B cell (primary cell): ENCODE measurements at regions of chr17 and their contacts with region 1.

Region 1: GRCh38 chr17:48724251-48725003 is 1.4 kb downstream of the PRAC2 start:
- DNase-seq: peak; percentile 77
- ATAC-seq: peak; percentile 47
- H3K4me3 ChIP-seq: peak overlapping the region in 1 of 5 experiments; percentile 18
- H3K4me3 Mint-ChIP-seq: peak overlapping the region; percentile 62
- H3K27ac ChIP-seq: no peak overlapping the region
- H3K27ac Mint-ChIP-seq: peak overlapping the region; percentile 69
- H3K4me1 ChIP-seq: peaks cover 51 to 77% of the 10 kb centered on the region in 2 donors
- H3K4me1 Mint-ChIP-seq: peaks cover 35% of the 10 kb centered on the region
- H3K27me3 ChIP-seq: peaks cover 0 to 100% (median 89%) of the 10 kb centered on the region in 4 experiments
- H3K27me3 Mint-ChIP-seq: peaks cover 80% of the 10 kb centered on the region
- CTCF ChIP-seq: peak; percentile 68

Region 2: GRCh38 chr17:48671697-48672171 is 52.7 kb before region 1 on chr17:
- CTCF ChIA-PET with region 1: no interaction called
- POLR2A ChIA-PET with region 1: no interaction called
- intact Hi-C with region 1: no loop called
- DNase-seq: peak; percentile 72
- ATAC-seq: peak; percentile 64
- H3K4me3 ChIP-seq: no peak overlapping the region
- H3K4me3 Mint-ChIP-seq: peak overlapping the region; percentile 26
- H3K27ac ChIP-seq: no peak overlapping the region
- H3K27ac Mint-ChIP-seq: no peak overlapping the region
- H3K4me1 ChIP-seq: peaks cover 6 to 7% of the 10 kb centered on the region in 2 donors
- H3K4me1 Mint-ChIP-seq: peaks cover 3% of the 10 kb centered on the region
- H3K27me3 ChIP-seq: peaks cover 0 to 28% (median 16%) of the 10 kb centered on the region in 4 experiments
- H3K27me3 Mint-ChIP-seq: peaks cover 46% of the 10 kb centered on the region
- CTCF ChIP-seq: peak; percentile 87

Region 3: GRCh38 chr17:48747445-48748363 is 23.3 kb after region 1 on chr17:
- CTCF ChIA-PET with region 1: interaction called, 17 read pairs
- POLR2A ChIA-PET with region 1: no interaction called
- intact Hi-C with region 1: loop called (anchors 2 kb)
- DNase-seq: peak; percentile 48
- ATAC-seq: no peak
- H3K4me3 ChIP-seq: no peak overlapping the region
- H3K4me3 Mint-ChIP-seq: no peak overlapping the region
- H3K27ac ChIP-seq: no peak overlapping the region
- H3K27ac Mint-ChIP-seq: no peak overlapping the region
- H3K4me1 ChIP-seq: peaks cover 3 to 46% of the 10 kb centered on the region in 2 donors
- H3K4me1 Mint-ChIP-seq: peaks cover 7% of the 10 kb centered on the region
- H3K27me3 ChIP-seq: peaks cover 0 to 95% (median 86%) of the 10 kb centered on the region in 4 experiments
- H3K27me3 Mint-ChIP-seq: peaks cover 78% of the 10 kb centered on the region
- CTCF ChIP-seq: no peak

Region 4: DNA sequence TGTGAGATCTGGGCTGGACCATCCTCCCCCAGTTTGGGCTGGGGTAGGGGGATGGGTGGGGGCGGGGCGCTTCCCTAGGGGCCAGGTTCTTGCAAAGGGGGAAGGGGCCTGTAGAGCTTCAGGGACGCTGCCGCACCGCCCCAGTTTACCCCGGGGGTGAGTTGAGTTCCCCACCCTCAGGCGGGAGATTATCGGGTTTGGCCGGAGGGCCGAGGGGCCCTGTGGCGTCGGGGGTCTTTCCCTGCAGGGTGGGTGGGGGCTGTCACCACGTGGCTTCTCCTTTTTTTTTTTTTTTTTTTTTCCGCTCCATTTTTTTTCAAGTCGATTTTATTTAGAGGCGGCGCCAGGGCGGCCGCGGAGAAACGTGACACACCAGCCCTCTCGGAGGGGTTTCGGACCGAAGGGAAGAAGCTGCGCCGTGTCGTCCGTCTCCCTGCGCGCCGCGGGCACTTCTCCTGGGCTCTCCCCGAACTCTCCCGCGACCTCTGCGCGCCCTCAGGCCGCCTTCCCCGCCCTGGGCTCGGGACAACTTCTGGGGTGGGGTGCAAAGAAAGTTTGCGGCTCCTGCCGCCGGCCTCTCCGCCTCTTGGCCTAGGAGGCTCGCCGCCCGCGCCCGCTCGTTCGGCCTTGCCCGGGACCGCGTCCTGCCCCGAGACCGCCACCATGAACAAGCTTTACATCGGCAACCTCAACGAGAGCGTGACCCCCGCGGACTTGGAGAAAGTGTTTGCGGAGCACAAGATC is 272.8 kb after region 1 on chr17 and contains the start of gene IGF2BP1:
- CTCF ChIA-PET with region 1: no interaction called
- POLR2A ChIA-PET with region 1: interaction called, 9 read pairs
- intact Hi-C with region 1: loop called (anchors 10 kb)
- DNase-seq: peak; percentile 73
- ATAC-seq: peak; percentile 52
- H3K4me3 ChIP-seq: peak within 1 kb of the TSS; percentile 14 to 62 (median 48)
- H3K4me3 Mint-ChIP-seq: peak within 1 kb of the TSS; percentile 84
- H3K27ac ChIP-seq: no peak within 1 kb of the TSS
- H3K27ac Mint-ChIP-seq: peak within 1 kb of the TSS; percentile 70
- H3K4me1 ChIP-seq: peaks cover 38 to 40% of the 10 kb centered on the region in 2 donors
- H3K4me1 Mint-ChIP-seq: peaks cover 33% of the 10 kb centered on the region
- H3K27me3 ChIP-seq: peaks cover 4 to 81% (median 69%) of the 10 kb centered on the region in 4 experiments
- H3K27me3 Mint-ChIP-seq: peaks cover 87% of the 10 kb centered on the region
- CTCF ChIP-seq: no peak
- total RNA-seq, gene IGF2BP1: 0.27 TPM in 1 of 2 replicates, not detected in the other

Region 5: DNA sequence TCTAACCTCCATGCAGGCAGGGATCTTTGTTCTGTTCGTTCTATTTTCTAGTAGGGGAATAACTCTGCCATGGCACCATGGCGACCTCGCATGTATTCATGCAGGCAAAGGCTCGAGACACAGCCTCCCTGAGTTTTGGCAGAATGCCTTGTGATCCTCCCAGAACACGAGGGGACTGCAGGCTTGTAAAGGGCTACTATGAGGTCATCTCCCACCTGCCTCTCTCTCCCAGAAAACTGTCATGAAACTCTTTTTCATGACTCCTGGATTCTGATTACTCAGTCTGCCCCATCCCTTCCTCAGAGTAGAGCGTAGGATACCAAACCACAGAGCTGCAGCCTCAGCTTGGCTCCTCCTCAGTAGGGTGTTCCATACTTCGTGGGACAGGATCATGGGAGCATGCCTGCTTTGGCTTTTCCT is 337.1 kb after region 1 on chr17:
- CTCF ChIA-PET with region 1: no interaction called
- POLR2A ChIA-PET with region 1: no interaction called
- intact Hi-C with region 1: no loop called
- DNase-seq: no peak
- ATAC-seq: no peak
- H3K4me3 ChIP-seq: no peak overlapping the region
- H3K4me3 Mint-ChIP-seq: no peak overlapping the region
- H3K27ac ChIP-seq: no peak overlapping the region
- H3K27ac Mint-ChIP-seq: no peak overlapping the region
- H3K4me1 ChIP-seq: no peaks in the 10 kb centered on the region
- H3K4me1 Mint-ChIP-seq: no peaks in the 10 kb centered on the region
- H3K27me3 ChIP-seq: no peaks in the 10 kb centered on the region
- H3K27me3 Mint-ChIP-seq: peaks cover 13% of the 10 kb centered on the region
- CTCF ChIP-seq: no peak

Region 6: GRCh38 chr17:49125449-49125848 is 401.0 kb after region 1 on chr17:
- CTCF ChIA-PET with region 1: no interaction called
- POLR2A ChIA-PET with region 1: no interaction called
- intact Hi-C with region 1: no loop called
- DNase-seq: no peak
- ATAC-seq: no peak
- H3K4me3 ChIP-seq: no peak overlapping the region
- H3K4me3 Mint-ChIP-seq: no peak overlapping the region
- H3K27ac ChIP-seq: no peak overlapping the region
- H3K27ac Mint-ChIP-seq: no peak overlapping the region
- H3K4me1 ChIP-seq: no peaks in the 10 kb centered on the region
- H3K4me1 Mint-ChIP-seq: no peaks in the 10 kb centered on the region
- H3K27me3 ChIP-seq: peaks cover 0 to 15% (median 4%) of the 10 kb centered on the region in 4 experiments
- H3K27me3 Mint-ChIP-seq: peaks cover 36% of the 10 kb centered on the region
- CTCF ChIP-seq: no peak